CD8-positive, alpha-beta T cell (primary cell): ENCODE measurements at regions of chr1 and their contacts with region 1.

Region 1: DNA sequence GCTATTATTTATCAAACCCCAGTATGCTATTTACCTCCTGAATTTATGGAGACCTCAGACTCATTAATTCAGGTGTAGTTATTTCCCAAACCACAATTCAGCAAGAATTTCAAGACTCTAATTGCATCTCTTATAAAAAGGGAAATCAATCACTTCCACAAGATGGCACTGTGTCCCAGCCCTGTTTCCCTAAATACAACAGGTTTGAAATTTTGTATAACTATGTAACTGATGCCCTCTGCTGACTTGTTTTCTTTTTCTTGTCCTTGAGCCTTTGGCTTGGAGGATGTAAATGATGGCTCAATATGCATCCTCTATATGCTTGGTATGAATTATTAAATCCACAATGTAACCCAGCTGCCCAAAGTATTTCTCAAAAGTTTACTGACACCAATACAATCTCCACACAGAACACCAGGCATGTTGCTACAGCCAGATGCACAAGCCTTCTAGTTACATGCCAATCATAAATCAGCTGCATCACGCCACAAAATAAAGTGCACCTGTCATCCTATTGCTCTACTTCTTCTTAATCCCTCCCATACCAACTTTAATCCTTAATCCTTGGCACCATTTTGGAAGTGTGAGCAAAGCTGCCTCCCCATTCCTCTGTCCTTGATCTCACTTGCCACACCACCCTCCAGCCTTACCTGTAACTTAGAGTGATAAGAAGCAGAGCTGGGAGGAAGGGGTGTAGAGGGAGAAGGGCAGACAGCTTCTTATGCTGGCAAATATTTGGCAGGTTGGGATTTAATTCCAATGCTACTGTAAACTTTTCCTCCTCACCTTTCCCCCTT is 9.0 kb downstream of the C1orf105 start:
- DNase-seq: peak in 6 of 9 experiments; percentile 22 to 80 (median 47)
- ATAC-seq: peak; percentile 75
- H3K4me3 ChIP-seq: no peak overlapping the region
- H3K4me3 Mint-ChIP-seq: no peak overlapping the region
- H3K27ac ChIP-seq: no peak overlapping the region
- H3K27ac Mint-ChIP-seq: peak overlapping the region; percentile 7
- H3K4me1 ChIP-seq: peaks cover 51% of the 10 kb centered on the region
- H3K4me1 Mint-ChIP-seq: peaks cover 49% of the 10 kb centered on the region
- H3K27me3 ChIP-seq: no peaks in the 10 kb centered on the region
- H3K27me3 Mint-ChIP-seq: no peaks in the 10 kb centered on the region
- CTCF ChIP-seq: peak; percentile 82

Region 2: GRCh38 chr1:171841050-171841940 is 588.2 kb before region 1 on chr1 and contains the start of gene DNM3:
- CTCF ChIA-PET with region 1: no interaction called
- POLR2A ChIA-PET with region 1: no interaction called
- intact Hi-C with region 1: loop called in 1 of 2 experiments (anchors 10 kb)
- DNase-seq: peak; percentile 51 to 89 (median 77)
- ATAC-seq: peak; percentile 94
- H3K4me3 ChIP-seq: peak within 1 kb of the TSS; percentile 75 to 80
- H3K4me3 Mint-ChIP-seq: peak within 1 kb of the TSS; percentile 87
- H3K27ac ChIP-seq: no peak within 1 kb of the TSS
- H3K27ac Mint-ChIP-seq: peak within 1 kb of the TSS; percentile 16
- H3K4me1 ChIP-seq: peaks cover 9% of the 10 kb centered on the region
- H3K4me1 Mint-ChIP-seq: peaks cover 14% of the 10 kb centered on the region
- H3K27me3 ChIP-seq: peaks cover 4 to 9% of the 10 kb centered on the region in 2 experiments
- H3K27me3 Mint-ChIP-seq: peaks cover 16% of the 10 kb centered on the region
- CTCF ChIP-seq: no peak
- total RNA-seq, gene DNM3: 0.72 to 1.1 TPM

Region 3: GRCh38 chr1:172002725-172003345 is 426.7 kb before region 1 on chr1:
- CTCF ChIA-PET with region 1: interaction called, 10 read pairs
- POLR2A ChIA-PET with region 1: no interaction called
- intact Hi-C with region 1: loop called in 1 of 2 experiments (anchors 1 kb)
- DNase-seq: peak in 4 of 9 experiments; percentile 9 to 66 (median 36)
- ATAC-seq: peak; percentile 44
- H3K4me3 ChIP-seq: no peak overlapping the region
- H3K4me3 Mint-ChIP-seq: no peak overlapping the region
- H3K27ac ChIP-seq: no peak overlapping the region
- H3K27ac Mint-ChIP-seq: no peak overlapping the region
- H3K4me1 ChIP-seq: no peaks in the 10 kb centered on the region
- H3K4me1 Mint-ChIP-seq: no peaks in the 10 kb centered on the region
- H3K27me3 ChIP-seq: no peaks in the 10 kb centered on the region
- H3K27me3 Mint-ChIP-seq: peaks cover under 1% of the 10 kb centered on the region
- CTCF ChIP-seq: peak; percentile 72

Region 4: DNA sequence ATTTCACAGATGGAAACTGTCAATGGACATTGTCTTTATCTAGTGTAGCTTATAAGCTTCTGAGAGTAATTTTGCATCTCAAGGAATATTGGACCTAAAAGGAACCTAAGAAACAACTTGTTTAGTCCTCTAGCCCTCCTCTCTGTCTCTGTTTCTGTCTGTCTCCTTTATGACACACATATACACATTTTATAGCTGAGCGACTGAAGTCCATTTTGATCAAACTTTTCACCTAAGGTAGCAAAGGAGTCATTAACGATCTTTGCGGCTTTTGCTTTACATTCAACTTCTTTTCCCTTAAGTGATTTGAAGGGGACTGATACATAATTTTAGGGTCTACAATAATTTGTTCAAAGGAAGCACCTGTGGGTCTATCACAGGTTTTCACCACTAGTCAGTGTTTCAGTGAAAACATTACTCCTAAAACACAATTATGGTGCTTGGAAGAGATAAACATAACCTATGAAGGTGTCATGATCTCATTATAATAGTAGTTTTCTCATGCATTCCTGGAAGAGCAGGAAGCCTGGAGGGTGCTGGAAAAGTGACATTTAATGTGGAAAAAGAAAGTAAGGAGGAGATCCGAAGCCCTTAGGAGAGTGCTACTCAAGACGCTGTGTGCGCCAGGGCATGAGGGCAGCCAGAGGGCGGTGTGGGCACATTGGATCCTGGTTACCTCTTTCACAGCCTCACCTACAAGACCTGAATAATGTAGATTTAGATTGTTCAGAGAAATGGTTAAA is 339.6 kb before region 1 on chr1:
- CTCF ChIA-PET with region 1: interaction called, 18 read pairs
- POLR2A ChIA-PET with region 1: no interaction called
- intact Hi-C with region 1: loop called in 1 of 2 experiments (anchors 1 kb)
- DNase-seq: peak; percentile 13 to 74 (median 54)
- ATAC-seq: peak; percentile 84
- H3K4me3 ChIP-seq: no peak overlapping the region
- H3K4me3 Mint-ChIP-seq: no peak overlapping the region
- H3K27ac ChIP-seq: no peak overlapping the region
- H3K27ac Mint-ChIP-seq: no peak overlapping the region
- H3K4me1 ChIP-seq: peaks cover 4% of the 10 kb centered on the region
- H3K4me1 Mint-ChIP-seq: peaks cover 4% of the 10 kb centered on the region
- H3K27me3 ChIP-seq: no peaks in the 10 kb centered on the region
- H3K27me3 Mint-ChIP-seq: no peaks in the 10 kb centered on the region
- CTCF ChIP-seq: peak; percentile 66

Region 5: GRCh38 chr1:172117800-172118199 is 311.7 kb before region 1 on chr1:
- CTCF ChIA-PET with region 1: no interaction called
- POLR2A ChIA-PET with region 1: no interaction called
- intact Hi-C with region 1: no loop called
- DNase-seq: peak in 8 of 9 experiments; percentile 4 to 72 (median 22)
- ATAC-seq: peak; percentile 86
- H3K4me3 ChIP-seq: no peak overlapping the region
- H3K4me3 Mint-ChIP-seq: peak overlapping the region; percentile 24
- H3K27ac ChIP-seq: peak overlapping the region in 1 of 2 experiments; percentile 34
- H3K27ac Mint-ChIP-seq: peak overlapping the region; percentile 60
- H3K4me1 ChIP-seq: peaks cover 20% of the 10 kb centered on the region
- H3K4me1 Mint-ChIP-seq: peaks cover 26% of the 10 kb centered on the region
- H3K27me3 ChIP-seq: no peaks in the 10 kb centered on the region
- H3K27me3 Mint-ChIP-seq: no peaks in the 10 kb centered on the region
- CTCF ChIP-seq: no peak

Region 6: DNA sequence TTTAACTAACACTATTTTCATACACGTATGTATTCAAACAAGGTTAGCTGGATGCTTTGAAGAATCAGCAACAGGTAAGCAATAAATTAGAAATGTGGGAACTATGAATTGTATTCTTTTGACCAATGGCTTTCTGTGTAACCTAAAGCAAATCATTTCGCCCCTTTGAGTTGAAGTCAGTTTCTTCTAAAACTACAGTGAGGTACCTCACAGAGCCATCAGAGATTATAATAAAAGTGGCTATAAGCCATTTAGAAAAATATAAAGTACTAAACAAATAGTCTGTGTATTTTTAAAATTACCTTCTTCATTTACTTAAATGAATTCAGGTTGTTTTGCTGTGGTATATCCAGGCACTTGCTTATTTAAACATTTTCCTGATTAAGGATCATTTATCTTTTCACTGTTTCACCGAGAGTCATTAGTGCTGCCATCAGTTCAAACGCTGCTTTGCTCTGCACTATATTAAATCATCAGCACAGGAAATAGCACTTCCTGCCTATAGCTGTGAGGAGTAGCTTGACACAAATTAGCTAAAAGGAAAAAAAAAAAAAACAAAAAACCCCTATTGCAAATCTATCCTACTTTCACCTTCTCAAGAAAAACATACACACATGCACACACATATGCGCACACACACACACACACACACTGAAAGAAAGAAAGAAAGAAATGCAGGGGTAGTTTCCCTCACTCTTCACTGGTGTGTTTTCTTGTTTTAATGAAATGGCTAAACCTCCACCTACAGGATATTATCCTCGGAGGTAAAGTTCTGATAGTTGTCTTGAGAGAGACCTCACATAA is 48.9 kb before region 1 on chr1:
- CTCF ChIA-PET with region 1: interaction called, 3 read pairs
- POLR2A ChIA-PET with region 1: no interaction called
- intact Hi-C with region 1: loop called in 1 of 2 experiments (anchors 5 kb)
- DNase-seq: peak in 6 of 9 experiments; percentile 17 to 83 (median 43)
- ATAC-seq: peak; percentile 95
- H3K4me3 ChIP-seq: peak overlapping the region; percentile 22 to 25
- H3K4me3 Mint-ChIP-seq: peak overlapping the region; percentile 80
- H3K27ac ChIP-seq: peak overlapping the region; percentile 14 to 84
- H3K27ac Mint-ChIP-seq: peak overlapping the region; percentile 97
- H3K4me1 ChIP-seq: peaks cover 14% of the 10 kb centered on the region
- H3K4me1 Mint-ChIP-seq: peaks cover 39% of the 10 kb centered on the region
- H3K27me3 ChIP-seq: no peaks in the 10 kb centered on the region
- H3K27me3 Mint-ChIP-seq: no peaks in the 10 kb centered on the region
- CTCF ChIP-seq: no peak

Region 7: DNA sequence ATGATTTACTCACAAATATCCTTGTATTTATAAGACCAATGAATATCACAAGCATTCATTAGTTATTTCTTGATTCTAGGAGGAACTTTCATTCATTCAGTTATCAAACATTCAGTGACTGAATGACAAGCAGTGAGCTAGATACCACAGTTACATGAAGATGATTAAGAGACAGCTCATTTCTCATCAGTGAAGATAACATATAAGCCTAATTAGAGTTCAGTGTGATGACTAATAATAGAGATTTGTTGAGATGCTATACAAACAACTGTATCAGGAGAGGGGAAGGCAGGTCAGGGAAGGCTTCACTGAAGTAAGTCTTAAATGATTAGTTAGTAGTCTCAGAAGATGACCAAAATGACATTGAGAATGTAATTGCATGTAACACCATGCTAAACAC is 23.6 kb before region 1 on chr1:
- CTCF ChIA-PET with region 1: interaction called, 10 read pairs
- POLR2A ChIA-PET with region 1: interaction called, 3 read pairs
- intact Hi-C with region 1: no loop called
- DNase-seq: no peak
- ATAC-seq: no peak
- H3K4me3 ChIP-seq: no peak overlapping the region
- H3K4me3 Mint-ChIP-seq: no peak overlapping the region
- H3K27ac ChIP-seq: no peak overlapping the region
- H3K27ac Mint-ChIP-seq: no peak overlapping the region
- H3K4me1 ChIP-seq: peaks cover 4% of the 10 kb centered on the region
- H3K4me1 Mint-ChIP-seq: peaks cover 15% of the 10 kb centered on the region
- H3K27me3 ChIP-seq: no peaks in the 10 kb centered on the region
- H3K27me3 Mint-ChIP-seq: no peaks in the 10 kb centered on the region
- CTCF ChIP-seq: no peak